ENCODE measurements at regions of chr3 and their contacts with region 1.

Region 1: DNA sequence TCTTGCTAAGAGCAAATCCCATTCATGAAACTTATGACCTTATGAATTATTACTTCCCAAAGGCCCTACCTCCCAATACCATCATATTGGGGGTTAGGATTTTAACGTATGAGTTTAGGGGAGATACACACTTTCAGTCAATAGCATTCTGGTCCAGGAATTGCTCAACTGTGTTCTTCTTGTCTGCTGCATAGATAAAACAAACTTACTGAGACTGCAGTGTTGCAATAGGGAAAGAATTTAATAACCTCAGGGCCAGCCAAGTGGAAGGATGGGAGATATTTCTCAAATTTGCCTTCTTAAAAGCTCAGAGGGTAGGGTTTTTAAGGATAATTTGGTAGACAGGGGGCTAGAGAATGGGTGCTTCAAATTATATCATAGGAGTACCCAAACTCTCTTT is 625.8 kb downstream of the OTOL1 start:
- DNase-seq: no peak
- ATAC-seq: no peak
- H3K4me3 ChIP-seq: no peak overlapping the region
- H3K27ac ChIP-seq: no peak overlapping the region
- H3K4me1 ChIP-seq: no peaks in the 10 kb centered on the region
- H3K27me3 ChIP-seq: no peaks in the 10 kb centered on the region
- CTCF ChIP-seq: no peak

Region 2: DNA sequence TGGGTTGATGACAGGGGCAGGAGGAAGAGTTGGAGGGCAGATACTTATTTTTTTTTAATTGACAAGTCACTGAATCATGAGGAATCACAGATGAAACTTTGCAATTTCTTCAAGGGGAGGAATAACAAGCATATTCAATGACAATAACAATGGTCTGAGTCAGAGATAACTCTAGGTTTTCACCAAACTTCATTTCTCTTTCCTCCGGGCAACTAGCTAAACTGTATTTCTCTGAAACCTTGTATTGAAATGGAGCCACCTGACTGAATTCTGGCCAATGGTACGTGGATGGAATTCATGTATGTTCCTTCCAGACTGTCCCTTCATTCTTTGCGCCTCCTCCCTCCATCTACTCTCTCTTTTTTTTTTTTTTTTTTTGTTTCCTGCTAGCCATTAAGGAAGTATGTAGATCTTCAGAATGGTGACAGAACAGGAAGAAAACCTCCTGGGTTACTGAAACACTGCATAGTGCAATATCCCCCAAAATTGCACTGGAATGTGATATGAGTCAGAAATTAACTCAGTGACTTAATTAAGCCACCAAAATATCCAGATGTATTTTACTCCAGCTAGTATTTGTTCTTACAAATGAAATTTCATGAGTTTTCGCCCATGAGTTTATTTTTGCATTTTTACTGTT is 130.4 kb before region 1 on chr3:
- intact Hi-C with region 1: loop called in 1 of 3 experiments (anchors 10 kb)
- DNase-seq: no peak
- ATAC-seq: no peak
- H3K4me3 ChIP-seq: no peak overlapping the region
- H3K27ac ChIP-seq: no peak overlapping the region
- H3K4me1 ChIP-seq: no peaks in the 10 kb centered on the region
- H3K27me3 ChIP-seq: no peaks in the 10 kb centered on the region
- CTCF ChIP-seq: no peak

Measured in pancreas (tissue), 10 donors.